ENCODE measurements at regions of chr13 and their contacts with region 1.

Region 1: DNA sequence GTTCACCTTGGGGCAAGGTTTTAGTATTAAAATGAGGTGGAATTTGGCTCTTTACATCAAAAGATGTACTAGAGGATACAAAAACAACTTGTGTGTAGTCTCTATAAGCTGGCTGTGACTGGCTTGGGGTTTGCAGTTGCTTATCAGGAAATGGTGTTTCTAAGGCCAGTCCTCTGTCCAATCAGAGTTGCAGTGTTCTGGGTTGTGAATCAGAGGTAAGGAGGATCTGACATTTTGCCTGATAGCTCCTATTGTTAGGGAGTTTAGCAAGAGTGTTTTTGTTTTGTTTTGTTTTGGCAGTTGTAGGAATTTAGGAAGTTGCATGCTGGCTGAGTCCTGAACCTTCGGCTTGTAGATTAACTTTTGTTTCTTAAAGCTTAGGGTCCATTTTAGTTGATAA is 20.1 kb upstream of the ESD start:
- DNase-seq: no peak
- H3K4me3 ChIP-seq: no peak overlapping the region
- H3K27ac ChIP-seq: no peak overlapping the region
- H3K27me3 ChIP-seq: peaks cover 0 to 4% (median 0%) of the 10 kb centered on the region in 45 donors
- CTCF ChIP-seq: no peak

Region 2: GRCh38 chr13:48144413-48145035 is 1327.4 kb after region 1 on chr13:
- intact Hi-C with region 1: loop called in 1 of 2 experiments (anchors 5 kb)
- DNase-seq: peak in 1 of 10 donors; percentile 21
- H3K4me3 ChIP-seq: no peak overlapping the region
- H3K27ac ChIP-seq: peak overlapping the region in 41 of 59 donors; percentile 3 to 80 (median 44)
- H3K27me3 ChIP-seq: no peaks in the 10 kb centered on the region
- CTCF ChIP-seq: no peak

Measured in dorsolateral prefrontal cortex (tissue), 120 donors.